CD8-positive, alpha-beta T cell (primary cell): ENCODE measurements at regions of chr11 and their contacts with region 1.

Region 1: GRCh38 chr11:96091476-96091875 is 167.6 kb upstream of the MTMR2 start:
- DNase-seq: peak in 4 of 9 experiments; percentile 14 to 66 (median 42)
- ATAC-seq: peak; percentile 97
- H3K4me3 ChIP-seq: no peak overlapping the region
- H3K4me3 Mint-ChIP-seq: no peak overlapping the region
- H3K27ac ChIP-seq: no peak overlapping the region
- H3K27ac Mint-ChIP-seq: peak overlapping the region; percentile 90
- H3K4me1 ChIP-seq: peaks cover 24% of the 10 kb centered on the region
- H3K4me1 Mint-ChIP-seq: peaks cover 81% of the 10 kb centered on the region
- H3K27me3 ChIP-seq: no peaks in the 10 kb centered on the region
- H3K27me3 Mint-ChIP-seq: no peaks in the 10 kb centered on the region
- CTCF ChIP-seq: peak; percentile 41

Region 2: DNA sequence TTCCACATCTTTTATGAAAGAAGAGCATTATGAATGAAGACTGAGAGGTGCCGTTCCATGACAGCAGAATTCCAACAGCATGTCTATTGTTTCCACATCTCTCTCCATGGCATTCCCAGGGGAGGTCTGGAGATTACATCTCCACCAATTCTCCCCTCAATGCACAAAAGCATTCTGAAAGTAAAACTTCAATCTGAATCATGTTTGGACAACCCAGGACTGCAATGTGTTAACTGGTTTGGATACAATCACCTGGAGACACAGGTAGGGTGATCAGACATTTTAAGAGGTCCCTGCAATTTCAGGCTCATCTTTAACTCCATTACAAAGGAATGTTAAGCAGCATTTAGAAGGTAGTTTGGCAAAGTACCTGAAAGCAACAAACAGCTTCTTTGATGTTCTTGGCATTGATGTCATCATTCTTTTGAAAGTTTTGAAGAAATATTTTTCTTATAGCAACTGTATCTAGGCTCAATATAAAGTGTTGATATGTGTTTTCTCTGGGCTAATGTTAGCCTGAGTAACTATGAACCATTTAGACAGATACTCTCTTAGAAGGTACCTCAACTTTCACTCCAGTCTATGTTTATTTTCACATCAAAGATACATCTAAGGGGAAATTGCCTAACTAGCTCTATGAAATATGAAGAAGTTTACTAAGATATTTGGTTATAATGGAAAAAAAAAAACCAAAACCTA is 13.9 kb after region 1 on chr11:
- CTCF ChIA-PET with region 1: interaction called, 11 read pairs
- POLR2A ChIA-PET with region 1: interaction called, 4 read pairs
- intact Hi-C with region 1: no loop called
- DNase-seq: peak in 2 of 9 experiments; percentile 55 to 76
- ATAC-seq: peak; percentile 91
- H3K4me3 ChIP-seq: no peak overlapping the region
- H3K4me3 Mint-ChIP-seq: peak overlapping the region; percentile 38
- H3K27ac ChIP-seq: peak overlapping the region in 1 of 2 experiments; percentile 8
- H3K27ac Mint-ChIP-seq: peak overlapping the region; percentile 93
- H3K4me1 ChIP-seq: peaks cover 25% of the 10 kb centered on the region
- H3K4me1 Mint-ChIP-seq: peaks cover 49% of the 10 kb centered on the region
- H3K27me3 ChIP-seq: no peaks in the 10 kb centered on the region
- H3K27me3 Mint-ChIP-seq: no peaks in the 10 kb centered on the region
- CTCF ChIP-seq: no peak